ENCODE measurements at regions of chr3 and their contacts with region 1.

Region 1: DNA sequence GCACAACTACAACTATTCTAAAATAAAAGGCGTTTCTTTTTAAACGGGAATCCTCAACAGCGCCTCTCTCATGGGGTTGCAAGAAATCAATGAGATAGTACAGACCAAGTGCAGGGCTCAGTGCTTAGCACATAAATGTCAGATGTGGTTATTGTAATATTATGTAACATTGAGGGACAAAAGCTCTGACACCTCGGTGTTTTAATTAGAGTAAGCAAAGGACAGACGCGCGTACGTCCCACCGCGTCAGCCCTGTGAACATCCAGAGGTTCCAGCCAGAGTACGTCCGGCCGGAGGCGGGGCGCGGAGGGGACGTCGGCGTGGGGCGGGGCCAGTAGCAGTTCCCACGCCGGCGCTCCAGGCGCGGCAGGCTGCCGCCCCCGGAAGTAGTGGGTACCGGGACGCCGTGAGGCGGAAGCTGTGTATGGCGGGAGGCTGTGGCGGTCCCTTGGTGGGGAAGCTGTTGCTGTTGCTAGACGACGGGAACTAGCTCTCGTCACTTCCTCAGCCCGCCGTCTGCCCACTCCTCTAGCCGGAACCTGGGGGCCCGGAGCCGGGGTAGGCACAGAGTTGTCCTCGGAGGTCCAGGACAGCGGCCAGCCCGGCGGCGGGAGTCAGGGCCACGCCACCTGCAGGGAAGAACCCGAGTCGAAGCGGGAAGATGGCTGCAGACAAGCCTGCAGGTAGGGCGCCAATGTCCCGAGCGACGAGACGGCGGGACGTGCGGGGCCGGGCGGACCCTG is at the start of gene CNOT10:
- DNase-seq: peak; percentile 95
- ATAC-seq: peak; percentile 95
- H3K4me3 Mint-ChIP-seq: peak within 1 kb of the TSS; percentile 93
- H3K27ac Mint-ChIP-seq: peak within 1 kb of the TSS; percentile 89
- H3K4me1 Mint-ChIP-seq: peaks cover 31% of the 10 kb centered on the region
- H3K27me3 Mint-ChIP-seq: no peaks in the 10 kb centered on the region
- CTCF ChIP-seq: no peak
- total RNA-seq, gene CNOT10: 48.0 and 55.5 TPM in 2 replicates

Region 2: DNA sequence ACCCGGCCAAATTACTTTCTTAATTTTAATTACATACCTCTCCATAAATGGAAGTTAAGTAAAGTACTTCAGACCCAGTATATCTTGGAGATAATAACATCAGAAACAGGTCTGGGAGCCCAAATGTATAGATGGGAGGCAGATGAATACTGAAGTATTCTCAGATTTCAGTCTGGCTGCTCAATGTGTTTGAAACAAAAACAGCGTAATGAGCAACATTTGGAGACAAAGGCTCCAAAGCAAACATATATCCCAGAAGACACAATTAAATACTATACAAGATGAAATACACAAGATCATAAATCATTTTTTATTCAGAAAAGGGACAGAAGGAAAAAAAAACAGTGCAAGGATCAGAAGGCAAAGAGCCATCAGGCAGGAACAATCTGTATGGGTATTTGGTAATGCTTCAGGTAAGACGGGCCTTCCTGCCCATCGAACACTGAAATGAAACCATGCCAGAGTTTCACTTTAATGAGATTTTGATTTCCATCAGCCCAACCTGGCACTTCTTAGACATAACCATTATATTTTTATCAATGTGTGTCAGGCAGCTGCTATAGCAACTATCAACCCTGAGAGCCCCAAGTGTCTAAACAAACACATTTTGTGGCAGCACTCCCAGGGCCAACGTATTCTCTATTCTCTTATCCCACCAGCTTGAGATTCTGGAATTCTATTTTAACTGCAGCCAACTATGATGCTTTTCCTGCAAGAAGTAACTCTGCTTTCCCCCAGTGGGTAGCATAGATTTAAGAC is 941.5 kb before region 1 on chr3:
- CTCF ChIA-PET with region 1: no interaction called
- POLR2A ChIA-PET with region 1: no interaction called
- intact Hi-C with region 1: no loop called
- DNase-seq: no peak
- ATAC-seq: no peak
- H3K4me3 Mint-ChIP-seq: no peak overlapping the region
- H3K27ac Mint-ChIP-seq: no peak overlapping the region
- H3K4me1 Mint-ChIP-seq: no peaks in the 10 kb centered on the region
- H3K27me3 Mint-ChIP-seq: no peaks in the 10 kb centered on the region
- CTCF ChIP-seq: no peak

Region 3: DNA sequence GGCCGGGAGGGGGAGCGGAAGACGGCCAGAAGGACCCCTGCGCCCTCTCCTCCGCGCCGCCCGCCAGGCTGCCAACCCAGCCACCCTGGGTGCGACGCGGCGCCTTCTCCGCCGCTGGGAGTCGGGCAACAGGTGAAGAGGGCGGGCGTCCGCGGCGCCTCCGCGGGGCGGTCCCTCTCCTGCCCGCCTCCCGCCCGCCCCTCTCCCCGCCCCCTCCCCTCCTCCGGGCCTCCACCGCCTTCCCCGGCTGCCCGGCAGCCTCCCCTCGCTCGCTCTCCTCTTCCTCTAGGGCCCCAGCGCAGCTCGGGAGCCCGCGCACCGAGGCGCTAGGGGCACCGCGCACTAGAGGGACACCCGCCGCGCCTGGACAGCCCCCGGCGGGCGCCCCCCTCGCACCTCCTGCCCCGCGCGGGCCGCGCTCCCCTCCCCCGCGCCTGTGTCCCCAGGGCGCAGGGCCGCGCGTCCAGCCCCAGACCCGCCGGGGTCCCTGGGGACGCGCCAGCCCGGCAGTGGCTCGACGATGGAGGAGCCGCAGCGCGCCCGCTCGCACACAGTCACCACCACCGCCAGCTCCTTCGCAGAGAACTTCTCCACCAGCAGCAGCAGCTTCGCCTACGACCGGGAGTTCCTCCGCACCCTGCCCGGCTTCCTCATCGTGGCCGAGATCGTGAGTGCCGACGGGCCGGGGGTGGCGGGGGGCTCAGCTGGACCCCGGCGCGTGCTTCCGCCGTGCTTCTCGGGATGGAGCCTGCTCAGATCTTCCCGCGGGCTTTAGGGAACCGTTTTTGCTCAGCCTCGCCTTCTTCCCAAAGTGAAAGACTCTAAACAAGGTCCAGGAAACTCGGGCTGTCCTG is 446.3 kb before region 1 on chr3 and contains the start of gene CMTM8:
- CTCF ChIA-PET with region 1: no interaction called
- POLR2A ChIA-PET with region 1: no interaction called
- intact Hi-C with region 1: loop called (anchors 5 kb)
- DNase-seq: peak; percentile 45
- ATAC-seq: peak; percentile 83
- H3K4me3 Mint-ChIP-seq: peak within 1 kb of the TSS; percentile 81
- H3K27ac Mint-ChIP-seq: no peak within 1 kb of the TSS
- H3K4me1 Mint-ChIP-seq: peaks cover 21% of the 10 kb centered on the region
- H3K27me3 Mint-ChIP-seq: peaks cover 22% of the 10 kb centered on the region
- CTCF ChIP-seq: no peak
- total RNA-seq, gene CMTM8: 0.24 TPM in 1 of 2 replicates, not detected in the other

Region 4: DNA sequence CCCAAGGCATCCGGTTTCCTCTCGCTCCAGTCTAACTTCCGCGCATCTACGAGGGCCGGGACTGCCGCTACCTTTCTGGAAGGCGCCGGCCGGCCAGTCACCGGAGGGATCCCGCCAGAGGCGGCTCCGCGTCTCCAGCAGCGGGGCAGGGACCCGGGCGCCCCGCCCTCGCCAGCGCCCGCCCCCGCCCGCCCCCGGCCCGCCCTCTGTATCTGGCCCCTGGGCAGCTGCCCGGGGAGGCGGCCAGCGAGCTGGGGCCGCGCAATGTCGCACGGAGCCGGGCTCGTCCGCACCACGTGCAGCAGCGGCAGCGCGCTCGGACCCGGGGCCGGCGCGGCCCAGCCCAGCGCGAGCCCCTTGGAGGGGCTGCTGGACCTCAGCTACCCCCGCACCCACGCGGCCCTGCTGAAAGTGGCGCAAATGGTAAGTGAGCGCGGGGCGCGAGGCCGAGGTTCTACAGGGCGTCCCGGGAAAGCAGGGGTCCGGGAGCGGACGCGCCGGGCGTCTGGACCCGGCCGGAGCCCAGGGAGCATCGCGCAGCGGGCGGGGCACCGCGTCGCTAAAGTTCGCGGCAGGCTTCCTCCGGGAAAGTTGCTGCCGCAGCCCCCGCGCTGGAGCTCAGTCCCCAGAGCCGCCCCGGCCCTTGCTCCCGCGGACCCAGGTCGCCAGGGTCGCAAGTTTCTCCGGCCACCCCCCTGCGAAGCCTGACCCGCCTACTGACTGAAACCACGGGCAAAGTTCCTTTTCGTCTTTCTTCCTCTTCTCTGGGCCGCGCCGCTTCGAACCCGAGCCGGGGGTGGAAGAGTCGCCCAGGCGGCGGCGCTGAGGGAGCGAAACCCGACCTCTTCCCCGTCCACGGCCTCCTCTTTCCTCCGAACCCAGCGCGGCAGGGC is 293.1 kb before region 1 on chr3 and contains the start of gene CMTM7:
- CTCF ChIA-PET with region 1: no interaction called
- POLR2A ChIA-PET with region 1: no interaction called
- intact Hi-C with region 1: loop called (anchors 2 kb)
- DNase-seq: peak; percentile 65
- ATAC-seq: peak; percentile 64
- H3K4me3 Mint-ChIP-seq: peak within 1 kb of the TSS; percentile 97
- H3K27ac Mint-ChIP-seq: peak within 1 kb of the TSS; percentile 90
- H3K4me1 Mint-ChIP-seq: peaks cover 56% of the 10 kb centered on the region
- H3K27me3 Mint-ChIP-seq: no peaks in the 10 kb centered on the region
- CTCF ChIP-seq: no peak
- total RNA-seq, gene CMTM7: 70.5 and 82.1 TPM in 2 replicates

Region 5: DNA sequence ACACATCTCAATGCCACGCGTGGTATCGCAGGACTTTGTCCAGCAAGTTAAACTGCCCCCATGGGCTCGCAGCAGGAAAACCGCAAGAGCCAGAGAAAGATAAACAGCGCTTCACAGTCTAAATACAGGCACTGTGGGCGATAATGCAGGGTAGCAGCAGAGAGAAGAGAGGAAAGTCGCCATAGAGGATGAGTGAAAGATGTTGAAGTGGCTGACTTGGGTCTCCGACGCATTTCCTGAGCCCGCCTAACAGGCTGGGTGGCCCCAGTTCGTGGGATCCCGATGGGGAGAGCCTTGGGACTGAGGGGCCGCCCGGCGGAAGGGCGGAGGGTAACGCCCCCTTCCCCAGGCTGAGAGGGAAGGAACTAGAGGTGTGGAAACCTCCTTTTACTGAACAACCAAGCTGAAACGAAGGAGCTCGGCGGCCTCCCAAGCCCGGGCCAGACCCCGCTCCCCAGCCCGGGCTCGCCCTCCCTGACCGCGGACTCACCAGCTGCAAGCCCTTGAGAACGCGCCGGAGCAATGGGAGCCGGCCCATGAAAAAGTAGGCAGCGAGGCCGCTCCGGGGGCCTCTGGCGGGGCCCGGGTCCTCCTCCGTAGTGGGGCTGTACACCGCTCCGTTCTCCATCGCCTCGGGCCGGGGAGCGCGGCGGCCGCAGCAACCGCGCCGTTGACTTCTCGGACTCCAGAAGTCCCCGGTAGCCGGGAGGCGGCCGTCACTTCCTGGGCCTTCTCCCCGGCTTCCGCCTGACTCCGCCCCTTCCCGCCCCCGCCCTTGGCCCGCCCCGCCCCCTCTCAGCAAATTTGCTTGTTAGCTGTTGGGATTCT is 182.6 kb before region 1 on chr3 and contains the start of gene CMTM6:
- CTCF ChIA-PET with region 1: no interaction called
- POLR2A ChIA-PET with region 1: interaction called, 6 read pairs
- intact Hi-C with region 1: loop called (anchors 1 kb)
- DNase-seq: peak; percentile 67
- ATAC-seq: peak; percentile 80
- H3K4me3 Mint-ChIP-seq: peak within 1 kb of the TSS; percentile 98
- H3K27ac Mint-ChIP-seq: peak within 1 kb of the TSS; percentile 90
- H3K4me1 Mint-ChIP-seq: peaks cover 41% of the 10 kb centered on the region
- H3K27me3 Mint-ChIP-seq: no peaks in the 10 kb centered on the region
- CTCF ChIP-seq: no peak
- total RNA-seq, gene CMTM6: 84.6 and 90.1 TPM in 2 replicates

Region 6: GRCh38 chr3:32570421-32571191 is 114.4 kb before region 1 on chr3 and contains the start of gene DYNC1LI1:
- CTCF ChIA-PET with region 1: no interaction called
- POLR2A ChIA-PET with region 1: interaction called, 3 read pairs
- intact Hi-C with region 1: loop called (anchors 1 kb)
- DNase-seq: peak; percentile 96
- ATAC-seq: peak; percentile 95
- H3K4me3 Mint-ChIP-seq: peak within 1 kb of the TSS; percentile 94
- H3K27ac Mint-ChIP-seq: peak within 1 kb of the TSS; percentile 93
- H3K4me1 Mint-ChIP-seq: peaks cover 32% of the 10 kb centered on the region
- H3K27me3 Mint-ChIP-seq: no peaks in the 10 kb centered on the region
- CTCF ChIP-seq: no peak
- total RNA-seq, gene DYNC1LI1: 32.6 and 38.8 TPM in 2 replicates

Region 7: GRCh38 chr3:33299395-33300081 is 614.6 kb after region 1 on chr3:
- CTCF ChIA-PET with region 1: no interaction called
- POLR2A ChIA-PET with region 1: no interaction called
- intact Hi-C with region 1: no loop called
- DNase-seq: no peak
- ATAC-seq: no peak
- H3K4me3 Mint-ChIP-seq: no peak overlapping the region
- H3K27ac Mint-ChIP-seq: no peak overlapping the region
- H3K4me1 Mint-ChIP-seq: no peaks in the 10 kb centered on the region
- H3K27me3 Mint-ChIP-seq: peaks cover 3% of the 10 kb centered on the region
- CTCF ChIP-seq: no peak

Region 8: DNA sequence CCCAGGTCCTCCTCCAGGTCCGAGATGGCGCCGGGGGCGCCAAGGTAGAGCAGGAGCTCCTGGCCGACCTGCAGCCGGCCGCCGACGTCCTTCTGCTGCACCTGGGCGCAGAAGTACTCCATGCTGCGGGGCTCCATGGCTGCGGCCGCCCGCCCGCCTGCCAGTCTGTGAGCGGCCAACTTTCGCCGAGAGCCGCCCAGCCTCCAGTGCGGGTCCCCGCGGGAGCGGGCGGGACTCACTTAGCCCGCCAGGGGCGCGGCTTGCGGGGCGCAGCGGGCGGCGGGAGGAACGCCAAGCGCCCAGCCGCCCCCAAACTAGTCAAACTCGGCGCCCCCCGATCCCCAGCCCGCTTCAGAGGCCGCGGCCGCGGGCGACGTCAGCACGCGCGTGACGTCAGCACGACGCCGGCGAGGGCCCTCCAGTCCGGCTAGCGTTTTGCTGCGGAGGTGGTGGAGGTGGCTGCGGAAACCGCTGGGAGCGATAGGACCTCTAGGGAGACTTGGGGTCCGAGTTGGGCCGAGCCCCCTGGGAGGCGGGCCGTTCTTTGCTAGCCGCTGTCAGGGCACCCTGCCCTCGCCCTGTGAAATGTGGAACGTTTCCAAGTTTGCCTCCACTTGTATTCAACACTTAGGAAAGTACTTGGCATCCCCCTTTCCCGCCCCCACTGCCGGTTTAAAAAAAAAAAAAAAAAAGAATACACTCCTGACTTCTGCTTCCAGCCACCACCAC is 1033.1 kb after region 1 on chr3 and contains the start of gene CLASP2:
- CTCF ChIA-PET with region 1: no interaction called
- POLR2A ChIA-PET with region 1: no interaction called
- intact Hi-C with region 1: loop called (anchors 5 kb)
- DNase-seq: peak; percentile 89
- ATAC-seq: peak; percentile 90
- H3K4me3 Mint-ChIP-seq: peak within 1 kb of the TSS; percentile 96
- H3K27ac Mint-ChIP-seq: peak within 1 kb of the TSS; percentile 98
- H3K4me1 Mint-ChIP-seq: peaks cover 12% of the 10 kb centered on the region
- H3K27me3 Mint-ChIP-seq: no peaks in the 10 kb centered on the region
- CTCF ChIP-seq: no peak
- total RNA-seq, gene CLASP2: 73.3 and 85.8 TPM in 2 replicates

Region 9: DNA sequence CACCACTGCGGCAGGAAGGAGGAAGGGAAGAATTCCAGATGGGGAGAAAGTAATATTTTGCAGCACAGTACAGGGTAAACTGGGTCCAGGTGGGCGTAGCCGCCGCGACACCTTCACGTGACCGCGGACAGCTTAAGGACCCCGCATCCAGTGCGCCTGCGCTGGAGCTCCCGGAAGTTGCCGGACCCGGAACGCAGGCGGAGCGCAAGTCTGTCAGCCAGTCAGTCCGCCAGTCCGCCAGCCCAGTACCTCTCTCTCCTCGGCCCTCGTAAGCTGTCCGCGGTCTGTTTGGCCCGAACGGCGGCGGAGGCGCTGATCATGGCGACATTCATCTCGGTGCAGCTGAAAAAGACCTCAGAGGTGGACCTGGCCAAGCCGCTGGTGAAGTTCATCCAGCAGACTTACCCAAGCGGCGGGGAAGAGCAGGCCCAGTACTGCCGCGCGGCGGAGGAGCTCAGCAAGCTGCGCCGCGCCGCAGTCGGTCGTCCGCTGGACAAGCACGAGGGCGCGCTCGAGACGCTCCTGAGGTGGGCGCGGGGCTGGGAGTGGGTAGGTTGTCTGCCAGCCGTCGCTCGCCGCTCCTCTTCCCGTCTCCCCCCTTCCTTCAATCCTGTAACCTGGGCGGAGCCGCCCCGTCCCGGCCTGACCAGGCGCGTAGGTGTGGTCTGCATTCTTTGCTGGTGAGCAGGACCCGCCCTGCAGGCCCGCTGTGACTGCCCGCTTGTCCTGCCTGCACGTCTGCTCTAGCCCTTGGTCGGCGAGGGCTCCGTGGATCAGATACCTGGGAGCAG is 1113.6 kb after region 1 on chr3 and contains the start of gene PDCD6IP:
- CTCF ChIA-PET with region 1: no interaction called
- POLR2A ChIA-PET with region 1: no interaction called
- intact Hi-C with region 1: loop called (anchors 1 kb)
- DNase-seq: peak; percentile 93
- ATAC-seq: peak; percentile 84
- H3K4me3 Mint-ChIP-seq: peak within 1 kb of the TSS; percentile 99
- H3K27ac Mint-ChIP-seq: peak within 1 kb of the TSS; percentile 95
- H3K4me1 Mint-ChIP-seq: peaks cover 52% of the 10 kb centered on the region
- H3K27me3 Mint-ChIP-seq: no peaks in the 10 kb centered on the region
- CTCF ChIP-seq: no peak
- total RNA-seq, gene PDCD6IP: 216 and 237 TPM in 2 replicates

Measured in activated B cell treated with CpG ODN at 0.5 μM for 24 hours (primary cell).